Prostate gland (tissue), 2 donors: ENCODE measurements at regions of chr22 and their contacts with region 1.

Region 1: DNA sequence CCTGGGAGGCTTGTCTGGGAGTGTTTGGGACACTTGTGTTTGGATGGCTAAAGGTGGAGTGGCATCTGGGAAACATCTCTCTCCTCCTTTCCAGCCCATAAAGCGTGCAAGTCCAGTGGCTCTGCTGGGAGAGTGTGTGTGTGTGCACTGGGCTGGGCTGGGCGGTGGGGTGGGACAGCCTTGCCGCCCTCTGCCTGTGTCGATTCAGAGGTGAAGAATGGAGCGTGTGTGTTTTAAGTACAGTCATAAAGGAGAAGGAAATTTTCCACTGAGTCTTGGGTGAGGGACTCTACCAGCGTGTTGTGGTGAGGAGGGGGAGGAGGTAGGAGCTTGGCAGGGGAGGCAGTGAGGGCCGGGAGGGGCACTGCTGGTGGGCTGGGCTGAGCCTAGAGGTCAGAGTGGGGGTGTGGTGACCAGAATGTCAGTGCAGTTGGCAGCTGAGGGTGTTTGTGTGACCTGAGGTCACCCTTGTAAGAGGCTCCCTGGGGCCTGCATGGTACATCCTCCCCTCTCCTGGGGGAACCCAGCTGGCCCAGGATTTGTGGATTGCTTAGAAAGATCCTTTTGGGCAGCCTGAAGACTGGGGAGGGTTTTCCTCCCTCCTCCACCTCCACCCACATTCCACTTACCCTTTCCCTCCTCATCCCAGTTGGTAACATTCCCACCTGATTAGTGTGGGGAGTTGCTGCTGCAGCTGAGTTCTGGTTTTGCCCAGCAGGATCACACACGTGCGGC is 1.7 kb downstream of the TIMP3 start:
- DNase-seq: no peak
- H3K4me3 ChIP-seq: peak overlapping the region; percentile 56 to 70
- H3K27ac ChIP-seq: peak overlapping the region; percentile 75 to 87
- H3K4me1 ChIP-seq: no peaks in the 10 kb centered on the region
- H3K27me3 ChIP-seq: peaks cover 4% of the 10 kb centered on the region
- CTCF ChIP-seq: no peak
- POLR2A ChIP-seq: no peak

Region 2: GRCh38 chr22:32850591-32851517 is 47.7 kb after region 1 on chr22:
- intact Hi-C with region 1: loop called (anchors 2 kb)
- DNase-seq: no peak
- H3K4me3 ChIP-seq: no peak overlapping the region
- H3K27ac ChIP-seq: peak overlapping the region; percentile 72 to 73
- H3K4me1 ChIP-seq: peaks cover 17% of the 10 kb centered on the region
- H3K27me3 ChIP-seq: no peaks in the 10 kb centered on the region
- CTCF ChIP-seq: no peak
- POLR2A ChIP-seq: no peak

Region 3: DNA sequence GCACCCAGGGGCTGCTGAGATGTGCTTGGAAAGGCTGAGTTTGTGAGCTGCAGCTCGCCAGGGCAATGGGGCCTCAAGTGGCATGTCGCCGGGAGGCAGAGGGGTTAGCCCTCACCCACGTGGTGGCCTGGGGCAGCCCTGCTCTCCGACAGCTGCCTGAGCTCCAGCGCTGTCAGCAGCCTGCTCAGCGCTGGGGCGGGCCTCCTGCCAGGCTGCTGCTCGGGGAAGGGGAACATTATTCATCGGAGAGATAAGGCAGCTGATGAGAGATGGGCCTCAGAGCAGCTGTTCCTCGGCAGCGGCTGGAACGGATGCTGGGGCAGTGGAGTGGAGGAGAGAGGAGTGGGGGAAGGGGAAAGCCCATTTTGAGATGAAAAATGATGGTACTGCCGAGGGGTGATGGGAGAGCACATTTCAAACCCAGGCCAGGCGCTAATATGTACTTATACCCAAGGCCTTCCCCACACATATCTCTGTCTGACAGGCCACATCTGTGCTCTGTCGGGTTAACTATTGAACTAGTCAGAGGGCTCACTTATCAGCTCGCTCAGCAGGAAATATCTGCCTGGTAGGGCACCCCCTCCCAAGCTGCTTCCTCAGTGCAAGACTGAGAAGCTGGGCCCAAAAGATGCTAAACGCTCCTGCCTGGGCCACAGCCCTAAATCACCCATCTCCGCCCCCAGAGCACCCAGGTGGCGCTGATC is 77.9 kb after region 1 on chr22:
- intact Hi-C with region 1: loop called (anchors 2 kb)
- DNase-seq: no peak
- H3K4me3 ChIP-seq: no peak overlapping the region
- H3K27ac ChIP-seq: no peak overlapping the region
- H3K4me1 ChIP-seq: no peaks in the 10 kb centered on the region
- H3K27me3 ChIP-seq: no peaks in the 10 kb centered on the region
- CTCF ChIP-seq: no peak
- POLR2A ChIP-seq: no peak

Region 4: DNA sequence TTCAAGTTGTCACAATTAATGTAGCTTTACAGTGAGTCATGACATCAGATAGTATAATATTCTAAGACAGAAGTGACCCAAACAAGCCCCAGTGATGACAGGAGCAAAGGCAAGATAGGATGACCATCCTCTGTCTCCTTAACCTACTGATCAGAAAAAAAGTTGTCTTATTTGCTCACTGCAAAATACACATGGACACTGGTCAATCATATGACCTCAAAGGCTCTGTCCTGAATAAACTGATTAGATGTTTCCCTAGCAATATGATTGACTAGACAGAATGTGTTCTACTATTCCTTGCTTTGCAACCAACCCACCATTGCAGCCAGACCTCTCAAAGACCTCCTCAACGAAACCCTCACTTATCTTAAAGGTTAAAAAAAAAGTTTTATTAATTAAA is 137.5 kb after region 1 on chr22:
- intact Hi-C with region 1: no loop called
- DNase-seq: no peak
- H3K4me3 ChIP-seq: no peak overlapping the region
- H3K27ac ChIP-seq: no peak overlapping the region
- H3K4me1 ChIP-seq: no peaks in the 10 kb centered on the region
- H3K27me3 ChIP-seq: no peaks in the 10 kb centered on the region
- CTCF ChIP-seq: no peak
- POLR2A ChIP-seq: no peak

Region 5: GRCh38 chr22:33116872-33117547 is 313.8 kb after region 1 on chr22:
- intact Hi-C with region 1: no loop called
- DNase-seq: no peak
- H3K4me3 ChIP-seq: no peak overlapping the region
- H3K27ac ChIP-seq: no peak overlapping the region
- H3K4me1 ChIP-seq: no peaks in the 10 kb centered on the region
- H3K27me3 ChIP-seq: no peaks in the 10 kb centered on the region
- CTCF ChIP-seq: no peak
- POLR2A ChIP-seq: no peak